Heart left ventricle (tissue), 16 donors: ENCODE measurements at regions of chr3 and their contacts with region 1.

Region 1: DNA sequence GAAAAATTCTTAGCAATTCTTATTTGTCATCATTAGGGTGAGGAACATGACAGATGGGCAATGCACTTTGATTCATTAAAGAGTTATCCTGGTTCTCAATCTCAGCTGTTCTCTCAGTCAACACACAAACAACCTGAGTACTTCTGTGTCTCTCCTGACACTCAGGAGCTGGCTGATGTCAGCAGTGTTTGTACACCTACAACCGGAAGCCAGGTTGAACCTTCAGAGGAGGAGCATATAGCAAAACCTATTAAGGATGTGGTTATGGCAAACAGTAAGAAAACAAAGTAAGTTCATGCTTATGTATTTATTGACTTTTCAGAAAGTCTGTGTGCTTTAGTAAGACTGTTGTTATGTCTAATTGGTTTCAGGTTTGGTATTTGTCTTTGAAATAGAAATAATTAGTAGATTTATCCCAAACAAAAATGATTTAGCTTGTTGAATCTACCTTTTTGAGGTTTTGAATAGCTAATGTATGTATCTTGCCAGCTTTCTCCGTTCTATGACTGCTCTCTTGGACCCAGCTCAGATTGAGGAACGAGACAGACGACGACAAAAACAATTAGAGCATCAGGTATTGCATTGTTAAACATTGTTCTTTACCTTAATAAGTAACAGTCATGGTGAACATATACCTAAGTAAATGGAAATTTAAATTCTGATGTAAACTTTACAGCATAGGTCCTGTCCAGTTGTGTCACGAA is 36.6 kb downstream of the CCDC66 start:
- DNase-seq: no peak
- ATAC-seq: no peak
- H3K4me3 ChIP-seq: no peak overlapping the region
- H3K27ac ChIP-seq: peak overlapping the region in 1 of 12 donors; percentile 37
- H3K4me1 ChIP-seq: no peaks in the 10 kb centered on the region
- H3K27me3 ChIP-seq: no peaks in the 10 kb centered on the region
- CTCF ChIP-seq: no peak
- POLR2A ChIP-seq: no peak

Region 2: GRCh38 chr3:56573501-56573900 is 20.1 kb before region 1 on chr3:
- intact Hi-C with region 1: loop called in 1 of 10 experiments (anchors 2 kb)
- DNase-seq: no peak
- ATAC-seq: no peak
- H3K4me3 ChIP-seq: no peak overlapping the region
- H3K27ac ChIP-seq: no peak overlapping the region
- H3K4me1 ChIP-seq: no peaks in the 10 kb centered on the region
- H3K27me3 ChIP-seq: no peaks in the 10 kb centered on the region
- CTCF ChIP-seq: no peak
- POLR2A ChIP-seq: no peak